ENCODE measurements at regions of chr2 and their contacts with region 1.

Region 1: GRCh38 chr2:171433763-171434670 is at the starts of genes DCAF17 and METTL8:
- DNase-seq: peak; percentile 84 to 97 (median 93)
- ATAC-seq: peak; percentile 91
- H3K4me3 ChIP-seq: peak within 1 kb of the TSS; percentile 79 to 93
- H3K4me3 Mint-ChIP-seq: peak within 1 kb of the TSS; percentile 91
- H3K27ac ChIP-seq: peak within 1 kb of the TSS; percentile 80 to 97
- H3K27ac Mint-ChIP-seq: peak within 1 kb of the TSS; percentile 96
- H3K4me1 ChIP-seq: peaks cover 12% of the 10 kb centered on the region
- H3K4me1 Mint-ChIP-seq: peaks cover 47% of the 10 kb centered on the region
- H3K27me3 ChIP-seq: no peaks in the 10 kb centered on the region
- H3K27me3 Mint-ChIP-seq: no peaks in the 10 kb centered on the region
- CTCF ChIP-seq: peak; percentile 12
- total RNA-seq, gene DCAF17: 12.5 to 12.9 TPM
- total RNA-seq, gene METTL8: 6.2 to 7.7 TPM

Region 2: DNA sequence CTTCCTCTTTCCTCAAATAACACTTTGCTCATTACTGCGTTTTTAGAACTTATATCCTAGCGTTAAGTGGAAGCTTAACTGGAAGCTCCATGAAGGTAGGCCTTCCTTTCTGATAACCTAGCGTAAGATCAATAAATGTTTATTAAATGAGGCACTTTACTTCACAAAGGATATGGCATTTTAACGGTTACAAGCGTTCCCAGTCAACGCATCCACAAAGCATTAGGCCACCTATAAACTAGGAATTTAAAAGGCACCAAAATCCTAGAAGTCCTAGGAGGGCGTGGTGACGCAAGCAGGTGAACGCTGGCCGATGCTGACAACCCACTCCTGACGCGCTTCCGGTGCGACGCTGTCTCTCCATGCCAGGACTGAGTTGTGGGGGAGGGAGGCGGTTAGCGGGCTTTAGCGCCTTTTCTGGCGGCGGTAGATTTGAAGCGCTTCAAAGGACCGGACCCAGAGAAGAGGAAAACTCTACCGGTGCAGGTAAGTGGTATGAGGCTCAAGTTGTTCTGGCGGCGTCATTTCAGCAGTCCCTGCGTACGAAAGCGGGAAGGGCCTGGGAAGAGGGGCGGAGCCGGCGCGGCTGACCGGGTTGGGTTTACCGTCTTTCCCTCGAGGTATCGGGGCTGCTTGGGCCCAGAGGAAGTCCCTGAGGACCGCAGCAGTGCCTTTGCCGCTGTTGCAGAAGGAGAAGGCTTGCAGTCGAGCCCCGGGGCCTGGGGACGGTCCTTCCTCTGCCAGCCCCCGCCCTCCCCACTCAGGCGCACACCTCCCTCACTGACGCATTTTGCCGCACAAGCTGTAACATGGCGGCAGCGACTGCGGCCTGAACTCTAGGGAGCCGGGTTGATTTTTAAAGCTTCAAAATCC is 1849.8 kb before region 1 on chr2 and contains the start of gene PPIG:
- CTCF ChIA-PET with region 1: no interaction called
- POLR2A ChIA-PET with region 1: no interaction called
- intact Hi-C with region 1: loop called (anchors 2 to 5 kb)
- DNase-seq: peak; percentile 74 to 97 (median 88)
- ATAC-seq: peak; percentile 91
- H3K4me3 ChIP-seq: peak within 1 kb of the TSS; percentile 85 to 100
- H3K4me3 Mint-ChIP-seq: peak within 1 kb of the TSS; percentile 97
- H3K27ac ChIP-seq: peak within 1 kb of the TSS; percentile 97 to 98
- H3K27ac Mint-ChIP-seq: peak within 1 kb of the TSS; percentile 100
- H3K4me1 ChIP-seq: peaks cover 25% of the 10 kb centered on the region
- H3K4me1 Mint-ChIP-seq: peaks cover 39% of the 10 kb centered on the region
- H3K27me3 ChIP-seq: no peaks in the 10 kb centered on the region
- H3K27me3 Mint-ChIP-seq: no peaks in the 10 kb centered on the region
- CTCF ChIP-seq: no peak
- total RNA-seq, gene PPIG: 89.8 to 104 TPM

Region 3: DNA sequence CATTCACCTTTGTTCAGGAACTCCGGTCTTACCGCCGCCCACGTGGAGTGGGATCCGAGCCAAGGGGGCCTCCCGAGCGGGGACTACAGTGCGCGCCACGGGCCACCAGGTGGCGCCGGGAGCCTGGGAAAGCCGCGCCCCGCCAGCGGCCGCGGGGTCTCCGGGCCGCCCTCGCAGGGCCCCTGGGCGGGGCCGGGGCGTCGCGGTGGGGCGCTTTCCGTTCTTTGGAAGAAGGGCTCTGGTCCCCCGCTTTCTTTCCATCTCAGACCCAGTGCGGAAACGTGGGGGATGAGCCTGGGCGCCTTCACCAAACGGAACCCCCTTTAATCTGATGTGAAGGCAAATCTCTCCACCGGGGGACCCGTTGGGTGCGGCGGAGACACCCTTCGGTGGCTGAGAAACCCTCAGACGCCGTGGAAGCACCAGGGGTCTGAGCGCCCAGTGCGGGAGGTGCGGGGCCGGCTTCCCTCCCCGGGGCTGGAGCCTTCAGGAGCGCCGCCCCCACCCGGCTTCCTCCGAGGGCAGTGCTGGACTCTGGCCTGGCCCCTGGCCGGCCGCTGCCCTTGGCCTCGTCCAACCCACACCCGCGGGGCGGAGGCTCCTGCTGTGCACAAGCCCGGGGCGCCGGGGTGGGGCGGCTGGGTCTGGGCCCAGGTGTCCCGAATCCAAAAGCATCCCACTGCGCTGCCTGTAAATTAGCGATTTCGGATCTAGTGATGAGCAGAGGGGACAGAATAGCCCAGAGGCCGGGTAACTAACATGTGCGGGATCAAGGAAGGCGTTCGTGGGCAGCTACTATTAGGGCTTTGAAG is 460.3 kb before region 1 on chr2:
- CTCF ChIA-PET with region 1: interaction called, 3 read pairs
- POLR2A ChIA-PET with region 1: interaction called, 3 read pairs
- intact Hi-C with region 1: loop called (anchors 1 kb)
- DNase-seq: peak; percentile 72 to 94 (median 87)
- ATAC-seq: peak; percentile 97
- H3K4me3 ChIP-seq: peak overlapping the region; percentile 75 to 88
- H3K4me3 Mint-ChIP-seq: peak overlapping the region; percentile 85
- H3K27ac ChIP-seq: peak overlapping the region; percentile 36 to 59
- H3K27ac Mint-ChIP-seq: peak overlapping the region; percentile 83
- H3K4me1 ChIP-seq: peaks cover 11% of the 10 kb centered on the region
- H3K4me1 Mint-ChIP-seq: peaks cover 7% of the 10 kb centered on the region
- H3K27me3 ChIP-seq: no peaks in the 10 kb centered on the region
- H3K27me3 Mint-ChIP-seq: no peaks in the 10 kb centered on the region
- CTCF ChIP-seq: peak; percentile 74

Region 4: GRCh38 chr2:171160119-171160955 is 273.7 kb before region 1 on chr2 and contains the start of gene TLK1:
- CTCF ChIA-PET with region 1: no interaction called
- POLR2A ChIA-PET with region 1: interaction called, 7 read pairs
- intact Hi-C with region 1: loop called (anchors 1 kb)
- DNase-seq: peak; percentile 55 to 88 (median 78)
- ATAC-seq: peak; percentile 56
- H3K4me3 ChIP-seq: peak within 1 kb of the TSS; percentile 75 to 92
- H3K4me3 Mint-ChIP-seq: peak within 1 kb of the TSS; percentile 90
- H3K27ac ChIP-seq: peak within 1 kb of the TSS; percentile 74 to 89
- H3K27ac Mint-ChIP-seq: peak within 1 kb of the TSS; percentile 94
- H3K4me1 ChIP-seq: peaks cover 44% of the 10 kb centered on the region
- H3K4me1 Mint-ChIP-seq: peaks cover 60% of the 10 kb centered on the region
- H3K27me3 ChIP-seq: no peaks in the 10 kb centered on the region
- H3K27me3 Mint-ChIP-seq: no peaks in the 10 kb centered on the region
- CTCF ChIP-seq: no peak
- total RNA-seq, gene TLK1: 95.7 to 107 TPM

Region 5: DNA sequence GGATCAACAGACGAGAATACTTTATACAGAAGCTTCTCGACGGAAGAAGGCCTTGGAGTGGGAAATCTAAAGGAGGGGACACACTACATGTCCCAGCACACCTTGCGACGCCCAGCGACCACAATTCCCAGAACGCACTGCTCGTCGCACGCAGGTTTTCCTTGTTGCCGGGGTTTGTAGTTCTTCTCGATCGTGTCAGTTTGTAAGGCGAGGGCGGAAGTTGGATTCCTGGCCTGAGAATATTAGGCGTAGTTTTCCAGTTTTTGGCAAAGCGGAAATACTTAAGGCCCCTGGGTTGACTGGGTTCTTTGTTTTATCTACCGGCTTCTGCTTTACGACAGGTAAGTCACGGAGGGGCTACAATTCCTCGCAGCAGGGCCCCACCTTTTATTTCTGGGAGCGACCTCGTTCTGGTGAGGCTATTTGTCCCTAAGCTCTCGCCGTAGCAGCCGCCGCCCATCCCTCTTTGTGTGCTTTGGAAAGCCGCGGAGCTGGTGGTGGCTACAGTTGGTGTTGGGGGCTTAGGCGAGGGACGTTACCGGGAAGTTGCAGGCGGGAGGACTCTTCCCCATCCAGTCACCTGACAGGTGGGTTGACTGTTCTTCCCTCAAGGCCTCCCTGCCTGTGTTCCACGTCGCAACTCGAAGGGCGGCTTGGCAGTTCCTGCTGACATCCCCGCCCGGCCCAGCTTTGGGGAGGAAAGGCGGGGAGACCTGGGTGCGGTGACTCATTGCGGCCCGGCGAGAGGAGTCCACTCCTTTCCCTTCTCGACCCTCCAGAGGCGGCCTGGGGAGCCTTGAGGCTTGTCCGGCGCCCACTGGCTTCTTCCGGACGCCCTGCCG is 253.5 kb after region 1 on chr2 and contains the start of gene DYNC1I2:
- CTCF ChIA-PET with region 1: no interaction called
- POLR2A ChIA-PET with region 1: no interaction called
- intact Hi-C with region 1: loop called (anchors 1 to 2 kb)
- DNase-seq: peak; percentile 33 to 89 (median 69)
- ATAC-seq: peak; percentile 76
- H3K4me3 ChIP-seq: peak within 1 kb of the TSS; percentile 89 to 93
- H3K4me3 Mint-ChIP-seq: peak within 1 kb of the TSS; percentile 94
- H3K27ac ChIP-seq: peak within 1 kb of the TSS; percentile 45 to 52
- H3K27ac Mint-ChIP-seq: peak within 1 kb of the TSS; percentile 91
- H3K4me1 ChIP-seq: peaks cover 11% of the 10 kb centered on the region
- H3K4me1 Mint-ChIP-seq: peaks cover 25% of the 10 kb centered on the region
- H3K27me3 ChIP-seq: no peaks in the 10 kb centered on the region
- H3K27me3 Mint-ChIP-seq: no peaks in the 10 kb centered on the region
- CTCF ChIP-seq: no peak
- total RNA-seq, gene DYNC1I2: 6.9 to 9.1 TPM